ENCODE measurements at regions of chr4 and their contacts with region 1.

Region 1: GRCh38 chr4:7067452-7068278 is at the start of gene GRPEL1:
- DNase-seq: peak; percentile 100
- ATAC-seq: peak; percentile 91
- H3K4me3 Mint-ChIP-seq: peak within 1 kb of the TSS; percentile 95
- H3K27ac Mint-ChIP-seq: peak within 1 kb of the TSS; percentile 90
- H3K4me1 Mint-ChIP-seq: peaks cover 44% of the 10 kb centered on the region
- H3K27me3 Mint-ChIP-seq: no peaks in the 10 kb centered on the region
- CTCF ChIP-seq: no peak
- total RNA-seq, gene GRPEL1: 31.8 and 41.3 TPM in 2 replicates

Region 2: DNA sequence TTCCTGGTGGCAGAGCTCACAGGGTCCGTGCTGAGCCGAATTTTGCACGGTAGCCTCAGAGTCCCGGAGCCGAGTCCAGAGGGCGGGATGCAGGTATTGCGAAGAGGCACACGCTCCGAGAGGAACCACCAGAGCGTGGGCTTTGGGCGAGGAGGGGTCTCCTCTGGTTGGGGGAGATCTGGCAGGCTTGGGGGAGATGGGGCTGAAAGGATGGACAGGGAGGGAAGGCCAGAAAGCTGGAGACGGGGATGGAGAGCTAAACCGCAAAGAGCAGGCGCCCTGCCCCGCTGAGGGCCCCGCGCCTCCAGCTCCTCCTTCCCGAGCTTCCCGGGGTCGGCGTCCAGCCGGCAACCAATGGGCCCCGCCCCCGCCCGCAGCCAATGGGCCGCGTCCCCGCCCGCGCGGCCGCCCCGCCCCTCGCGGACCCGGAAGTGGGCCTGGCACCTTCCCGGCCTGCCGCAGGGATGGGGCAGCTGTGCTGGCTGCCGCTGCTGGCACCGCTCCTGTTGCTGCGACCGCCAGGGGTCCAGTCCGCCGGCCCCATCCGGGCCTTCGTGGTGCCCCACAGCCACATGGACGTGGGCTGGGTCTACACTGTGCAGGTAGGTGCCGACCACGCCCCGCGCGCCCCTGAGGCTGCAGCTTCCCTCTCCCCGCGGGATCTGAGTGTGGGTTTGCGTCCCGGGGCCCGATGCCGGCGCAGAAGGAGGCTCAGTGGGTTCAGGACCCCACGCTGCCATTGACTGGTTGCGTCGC is 492.7 kb before region 1 on chr4 and contains the start of gene MAN2B2:
- CTCF ChIA-PET with region 1: no interaction called
- POLR2A ChIA-PET with region 1: interaction called, 3 read pairs
- intact Hi-C with region 1: loop called (anchors 10 kb)
- DNase-seq: peak; percentile 86
- ATAC-seq: peak; percentile 96
- H3K4me3 Mint-ChIP-seq: peak within 1 kb of the TSS; percentile 88
- H3K27ac Mint-ChIP-seq: peak within 1 kb of the TSS; percentile 74
- H3K4me1 Mint-ChIP-seq: peaks cover 14% of the 10 kb centered on the region
- H3K27me3 Mint-ChIP-seq: no peaks in the 10 kb centered on the region
- CTCF ChIP-seq: no peak
- total RNA-seq, gene MAN2B2: 24.2 and 24.7 TPM in 2 replicates

Region 3: DNA sequence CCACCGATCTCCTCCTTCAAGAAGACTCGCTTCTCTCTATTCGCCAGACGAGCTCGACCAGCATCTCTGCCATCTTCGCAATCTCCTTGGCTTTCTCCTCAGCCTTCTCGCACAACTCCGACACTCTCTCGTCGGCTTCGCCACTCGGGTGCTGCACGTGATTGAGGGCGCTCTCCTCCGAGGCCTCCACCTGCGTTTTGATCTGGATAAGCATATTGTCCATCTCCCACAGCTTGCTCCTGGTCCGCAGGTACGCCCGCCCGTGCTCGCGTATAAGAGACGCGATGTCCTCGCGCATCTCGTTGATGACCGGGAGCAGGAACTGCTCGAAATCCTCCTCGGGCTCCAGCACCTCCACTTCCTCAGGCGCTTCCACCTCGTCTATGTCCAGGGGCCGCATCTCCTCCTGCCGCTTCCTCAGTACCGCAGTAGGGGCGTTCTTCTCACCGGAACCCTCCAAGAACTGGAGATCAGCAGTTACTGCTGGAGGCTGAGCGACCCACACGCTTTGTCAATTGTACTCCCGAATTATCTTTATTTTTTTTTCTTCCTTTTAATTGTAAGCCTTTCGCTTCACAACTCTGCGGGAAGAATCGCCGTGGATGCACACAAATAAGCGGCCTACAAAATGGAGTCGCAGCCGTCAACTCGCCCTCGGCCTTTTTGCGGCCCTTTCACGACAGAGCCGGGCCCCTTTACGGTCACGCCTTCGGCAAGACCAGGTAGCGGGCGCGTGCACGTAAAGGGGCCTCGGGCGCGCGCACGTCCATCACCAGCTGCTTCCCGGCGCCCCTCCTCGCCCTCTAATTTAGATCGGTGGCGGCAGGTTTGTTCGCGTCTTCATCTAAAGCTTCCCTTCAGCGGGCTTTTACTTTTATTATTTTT is 358.2 kb before region 1 on chr4 and contains the start of gene MRFAP1L1:
- CTCF ChIA-PET with region 1: interaction called, 4 read pairs
- POLR2A ChIA-PET with region 1: interaction called, 18 read pairs
- intact Hi-C with region 1: loop called (anchors 1 kb)
- DNase-seq: peak; percentile 93
- ATAC-seq: peak; percentile 84
- H3K4me3 Mint-ChIP-seq: peak within 1 kb of the TSS; percentile 99
- H3K27ac Mint-ChIP-seq: peak within 1 kb of the TSS; percentile 96
- H3K4me1 Mint-ChIP-seq: peaks cover 64% of the 10 kb centered on the region
- H3K27me3 Mint-ChIP-seq: peaks cover 3% of the 10 kb centered on the region
- CTCF ChIP-seq: no peak
- total RNA-seq, gene MRFAP1L1: 39.1 and 39.5 TPM in 2 replicates

Region 4: DNA sequence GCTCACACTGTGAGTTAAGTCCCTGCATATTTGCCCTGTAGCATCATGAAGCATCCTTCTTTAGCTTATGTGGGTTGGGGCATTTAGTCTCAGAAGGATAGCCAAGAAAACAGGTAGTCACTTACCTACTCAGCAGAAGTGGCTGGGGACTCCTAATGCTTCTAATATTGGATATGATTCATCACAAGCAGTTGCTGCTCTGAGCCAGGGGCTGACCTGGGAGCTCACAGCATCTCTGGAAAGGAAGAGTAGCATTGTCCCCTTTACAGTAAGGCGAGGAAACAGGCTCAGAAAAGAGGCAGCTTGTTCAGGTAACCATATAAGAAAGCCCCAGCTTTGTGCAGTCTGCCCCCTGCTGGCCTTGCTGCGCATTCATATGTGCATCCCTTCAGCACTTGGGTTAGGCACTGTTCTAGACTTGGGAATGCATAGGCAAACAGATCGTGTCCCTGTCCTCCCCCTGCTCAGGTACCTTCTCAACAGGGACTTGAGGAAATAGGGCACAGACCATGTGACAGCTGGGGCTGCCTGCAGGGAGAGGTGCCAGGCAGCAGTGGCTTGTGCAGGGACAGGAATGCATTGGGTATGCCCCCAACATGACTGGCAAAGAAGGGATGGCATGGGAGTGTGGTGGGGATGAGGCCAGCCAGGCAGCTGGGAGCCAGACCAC is 193.7 kb before region 1 on chr4:
- CTCF ChIA-PET with region 1: interaction called, 12 read pairs
- POLR2A ChIA-PET with region 1: interaction called, 3 read pairs
- intact Hi-C with region 1: loop called (anchors 1 kb)
- DNase-seq: peak; percentile 50
- ATAC-seq: peak; percentile 74
- H3K4me3 Mint-ChIP-seq: no peak overlapping the region
- H3K27ac Mint-ChIP-seq: no peak overlapping the region
- H3K4me1 Mint-ChIP-seq: peaks cover 12% of the 10 kb centered on the region
- H3K27me3 Mint-ChIP-seq: no peaks in the 10 kb centered on the region
- CTCF ChIP-seq: no peak

Region 5: DNA sequence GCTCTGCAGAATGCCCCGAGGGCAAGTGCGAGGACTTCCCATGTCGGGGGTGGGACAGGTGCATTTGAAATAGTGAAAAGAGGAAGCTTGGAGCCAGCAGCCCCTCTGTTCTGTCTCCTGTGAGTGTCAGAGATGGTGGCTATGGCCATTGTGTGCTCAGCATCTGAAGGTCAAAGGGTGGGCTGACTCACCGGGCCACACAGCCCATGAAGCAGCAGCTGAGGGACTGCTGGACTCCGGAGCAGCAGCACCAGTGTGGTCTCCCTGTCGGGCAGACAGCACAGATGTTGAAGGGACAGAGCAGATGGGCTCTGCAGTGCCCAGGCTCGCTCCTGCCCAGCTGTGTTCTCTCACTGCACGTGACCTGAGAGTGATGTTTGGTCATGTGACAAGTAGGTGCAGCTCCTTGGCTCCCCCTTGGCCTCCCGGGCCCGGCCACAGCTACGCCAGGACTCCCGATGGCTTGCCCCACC is 104.5 kb before region 1 on chr4:
- CTCF ChIA-PET with region 1: interaction called, 3 read pairs
- POLR2A ChIA-PET with region 1: interaction called, 11 read pairs
- intact Hi-C with region 1: no loop called
- DNase-seq: no peak
- ATAC-seq: peak; percentile 28
- H3K4me3 Mint-ChIP-seq: peak overlapping the region; percentile 83
- H3K27ac Mint-ChIP-seq: peak overlapping the region; percentile 87
- H3K4me1 Mint-ChIP-seq: peaks cover 51% of the 10 kb centered on the region
- H3K27me3 Mint-ChIP-seq: no peaks in the 10 kb centered on the region
- CTCF ChIP-seq: no peak

Region 6: DNA sequence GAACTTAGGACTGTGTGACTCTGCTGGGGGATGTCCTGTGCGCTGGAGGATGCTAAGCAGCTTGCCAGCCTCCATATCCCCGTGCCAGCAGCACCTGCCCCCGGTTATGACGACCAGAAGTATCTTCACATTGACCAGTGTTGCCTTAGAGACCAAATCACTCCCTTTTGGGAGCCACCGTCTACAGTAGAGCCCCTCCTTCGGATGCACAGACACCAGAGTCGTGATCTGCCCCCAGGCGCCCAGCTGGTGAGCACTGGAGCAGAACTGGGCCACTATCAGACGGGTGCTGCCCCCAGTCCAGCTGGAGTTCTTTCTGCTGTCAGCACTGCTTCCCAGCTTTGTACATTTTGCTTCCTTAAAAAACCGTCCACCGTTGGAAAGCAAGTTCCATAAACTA is 54.5 kb before region 1 on chr4:
- CTCF ChIA-PET with region 1: interaction called, 5 read pairs
- POLR2A ChIA-PET with region 1: interaction called, 13 read pairs
- intact Hi-C with region 1: loop called (anchors 1 kb)
- DNase-seq: no peak
- ATAC-seq: peak; percentile 60
- H3K4me3 Mint-ChIP-seq: no peak overlapping the region
- H3K27ac Mint-ChIP-seq: peak overlapping the region; percentile 67
- H3K4me1 Mint-ChIP-seq: peaks cover 20% of the 10 kb centered on the region
- H3K27me3 Mint-ChIP-seq: no peaks in the 10 kb centered on the region
- CTCF ChIP-seq: no peak

Measured in activated B cell treated with CpG ODN at 0.5 μM for 24 hours (primary cell).